Heart left ventricle (tissue), 16 donors: ENCODE measurements at regions of chr14 and their contacts with region 1.

Region 1: GRCh38 chr14:61561657-61562276 is 133.5 kb upstream of the HIF1A start:
- DNase-seq: peak; percentile 66 to 87 (median 73)
- ATAC-seq: peak; percentile 52 to 90 (median 80)
- H3K4me3 ChIP-seq: no peak overlapping the region
- H3K27ac ChIP-seq: peak overlapping the region; percentile 31 to 94 (median 76)
- H3K4me1 ChIP-seq: peaks cover 2 to 67% (median 32%) of the 10 kb centered on the region in 12 donors
- H3K27me3 ChIP-seq: no peaks in the 10 kb centered on the region
- CTCF ChIP-seq: peak in 1 of 12 donors; percentile 7
- POLR2A ChIP-seq: no peak

Region 2: DNA sequence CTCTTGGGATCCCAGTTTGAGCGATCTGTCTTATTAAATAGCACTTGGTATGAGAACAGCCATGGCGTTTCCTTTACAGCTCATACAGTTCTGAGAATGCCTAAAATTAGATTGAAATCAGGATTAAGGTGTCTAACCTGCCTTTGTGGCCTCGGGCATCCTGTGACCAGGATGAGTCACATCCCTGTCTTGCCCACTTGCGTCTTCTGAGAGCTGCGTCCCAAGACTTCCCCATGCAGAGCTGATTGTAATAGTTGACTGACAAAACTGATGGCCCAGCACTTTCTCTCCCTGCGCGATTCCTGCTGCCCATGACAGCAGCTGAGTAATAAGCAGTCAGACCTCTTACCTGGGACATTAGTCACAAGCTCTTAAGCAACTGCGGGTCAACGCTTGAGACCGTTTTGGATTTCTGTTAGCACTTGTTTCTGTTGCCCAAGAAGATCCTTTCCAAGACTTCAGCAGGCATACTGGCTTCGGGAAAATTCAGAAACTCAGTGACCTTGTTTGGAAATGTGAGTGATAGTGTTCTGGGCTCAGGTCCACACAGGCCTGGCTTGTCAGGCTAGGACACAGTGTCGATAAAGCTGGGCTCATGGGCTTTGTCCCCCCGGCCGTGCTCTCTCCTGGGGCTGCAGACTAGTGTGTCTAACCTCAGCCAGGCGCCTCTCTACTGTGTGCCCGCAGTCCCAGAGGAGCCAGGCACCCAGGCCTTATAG is 36.3 kb before region 1 on chr14:
- intact Hi-C with region 1: loop called in 1 of 10 experiments (anchors 5 kb)
- DNase-seq: peak; percentile 51 to 74 (median 67)
- ATAC-seq: peak; percentile 61 to 86 (median 83)
- H3K4me3 ChIP-seq: no peak overlapping the region
- H3K27ac ChIP-seq: peak overlapping the region; percentile 68 to 88 (median 76)
- H3K4me1 ChIP-seq: peaks cover 0 to 57% (median 45%) of the 10 kb centered on the region in 12 donors
- H3K27me3 ChIP-seq: no peaks in the 10 kb centered on the region
- CTCF ChIP-seq: no peak
- POLR2A ChIP-seq: no peak

Region 3: GRCh38 chr14:61547186-61548086 is 14.3 kb before region 1 on chr14:
- intact Hi-C with region 1: loop called in 1 of 10 experiments (anchors 2 kb)
- DNase-seq: peak in 1 of 5 donors; percentile 40
- ATAC-seq: peak in 1 of 4 donors; percentile 32
- H3K4me3 ChIP-seq: no peak overlapping the region
- H3K27ac ChIP-seq: peak overlapping the region in 4 of 12 donors; percentile 1 to 48 (median 43)
- H3K4me1 ChIP-seq: peaks cover 6 to 84% (median 47%) of the 10 kb centered on the region in 12 donors
- H3K27me3 ChIP-seq: no peaks in the 10 kb centered on the region
- CTCF ChIP-seq: no peak
- POLR2A ChIP-seq: no peak